ENCODE measurements at regions of chr5 and their contacts with region 1.

Region 1: GRCh38 chr5:115460472-115460871 is 84.1 kb downstream of the FEM1C start:
- DNase-seq: no peak
- H3K4me3 Mint-ChIP-seq: no peak overlapping the region
- H3K27ac Mint-ChIP-seq: no peak overlapping the region
- H3K4me1 Mint-ChIP-seq: peaks cover 6% of the 10 kb centered on the region
- H3K27me3 Mint-ChIP-seq: peaks cover 34% of the 10 kb centered on the region

Region 2: GRCh38 chr5:115209279-115209678 is 251.2 kb before region 1 on chr5:
- intact Hi-C with region 1: loop called (anchors 2 kb)
- DNase-seq: peak; percentile 62
- H3K4me3 Mint-ChIP-seq: no peak overlapping the region
- H3K27ac Mint-ChIP-seq: peak overlapping the region; percentile 67
- H3K4me1 Mint-ChIP-seq: peaks cover 22% of the 10 kb centered on the region
- H3K27me3 Mint-ChIP-seq: no peaks in the 10 kb centered on the region

Region 3: DNA sequence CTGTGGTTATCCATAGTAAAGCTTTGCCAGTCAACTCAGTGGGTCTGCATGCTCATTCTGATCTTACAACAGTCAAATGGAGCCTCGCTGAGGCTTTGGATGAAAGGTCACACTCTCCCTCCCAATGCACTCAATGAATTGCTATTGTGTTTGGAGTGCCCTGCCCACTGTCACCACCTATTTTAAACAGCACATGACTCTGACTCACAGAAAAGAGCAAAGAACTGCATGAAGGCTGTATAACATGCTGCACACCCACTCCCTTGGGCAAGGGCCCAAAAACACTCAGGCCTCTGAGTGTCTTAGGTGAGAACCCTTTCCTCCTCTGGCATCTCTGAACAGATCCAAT is 45.4 kb before region 1 on chr5:
- intact Hi-C with region 1: loop called (anchors 1 kb)
- DNase-seq: no peak
- H3K4me3 Mint-ChIP-seq: no peak overlapping the region
- H3K27ac Mint-ChIP-seq: no peak overlapping the region
- H3K4me1 Mint-ChIP-seq: peaks cover 3% of the 10 kb centered on the region
- H3K27me3 Mint-ChIP-seq: peaks cover 8% of the 10 kb centered on the region

Region 4: GRCh38 chr5:115544436-115545350 is 84.2 kb after region 1 on chr5 and contains the start of gene FEM1C:
- intact Hi-C with region 1: loop called (anchors 1 kb)
- DNase-seq: peak; percentile 92
- H3K4me3 Mint-ChIP-seq: peak within 1 kb of the TSS; percentile 97
- H3K27ac Mint-ChIP-seq: peak within 1 kb of the TSS; percentile 99
- H3K4me1 Mint-ChIP-seq: peaks cover 39% of the 10 kb centered on the region
- H3K27me3 Mint-ChIP-seq: no peaks in the 10 kb centered on the region
- total RNA-seq, gene FEM1C: 14.3 and 15.0 TPM in 2 replicates

Region 5: GRCh38 chr5:115634343-115635132 is 174.1 kb after region 1 on chr5:
- intact Hi-C with region 1: no loop called
- DNase-seq: peak; percentile 75
- H3K4me3 Mint-ChIP-seq: peak overlapping the region; percentile 33
- H3K27ac Mint-ChIP-seq: no peak overlapping the region
- H3K4me1 Mint-ChIP-seq: peaks cover 41% of the 10 kb centered on the region
- H3K27me3 Mint-ChIP-seq: peaks cover 57% of the 10 kb centered on the region

Region 6: DNA sequence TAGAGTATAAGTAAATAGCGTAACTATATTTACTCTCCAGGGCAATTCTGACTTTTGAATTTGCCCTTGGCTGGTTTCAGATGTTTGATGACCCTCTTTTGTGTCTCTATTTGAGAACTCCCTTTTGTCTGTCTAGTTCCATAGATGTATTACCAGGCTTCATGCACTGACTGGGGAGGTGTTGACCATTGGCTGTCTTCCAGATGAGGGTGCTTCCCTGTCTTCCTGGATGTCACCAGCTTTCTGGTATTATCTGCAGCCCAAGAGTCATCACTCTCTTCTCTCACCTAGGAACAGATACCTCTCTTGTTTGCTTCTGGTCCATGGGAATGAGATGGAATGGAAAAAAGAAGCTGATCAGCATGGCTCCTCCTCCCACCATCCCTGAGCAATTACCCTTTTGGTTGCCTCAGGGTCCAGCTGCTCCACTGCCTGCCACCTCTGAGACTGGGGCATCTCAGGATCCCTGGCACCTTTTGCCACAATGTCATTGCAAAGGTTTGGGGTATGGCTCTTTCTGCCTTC is 224.1 kb after region 1 on chr5:
- intact Hi-C with region 1: no loop called
- DNase-seq: no peak
- H3K4me3 Mint-ChIP-seq: no peak overlapping the region
- H3K27ac Mint-ChIP-seq: no peak overlapping the region
- H3K4me1 Mint-ChIP-seq: no peaks in the 10 kb centered on the region
- H3K27me3 Mint-ChIP-seq: peaks cover 16% of the 10 kb centered on the region

Region 7: DNA sequence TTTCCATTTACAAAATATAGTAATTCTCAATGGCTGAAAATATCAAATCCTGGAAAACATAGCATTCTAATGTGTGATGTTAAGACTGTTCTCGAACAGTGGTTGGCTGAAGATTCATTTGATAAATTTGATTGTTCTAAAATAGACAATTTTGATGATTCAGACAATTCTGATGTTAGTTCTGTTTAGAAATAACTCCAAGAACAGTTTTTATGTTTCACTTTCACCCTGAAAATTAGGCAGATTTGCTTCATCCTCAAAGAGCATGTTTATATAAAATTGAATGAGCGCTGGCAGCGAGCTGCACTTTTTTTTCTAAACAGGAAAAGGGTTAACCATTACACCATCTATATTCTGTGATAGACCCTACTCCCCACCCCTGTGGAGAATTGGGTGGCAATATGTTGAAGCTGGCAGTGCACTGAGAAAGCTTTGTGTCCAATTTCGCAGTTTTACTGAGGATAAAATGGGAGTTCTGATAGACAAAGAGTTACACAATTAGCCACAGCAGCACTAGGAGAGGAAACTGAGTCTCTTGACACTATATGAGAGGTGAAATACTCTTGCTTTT is 234.9 kb after region 1 on chr5:
- intact Hi-C with region 1: no loop called
- DNase-seq: no peak
- H3K4me3 Mint-ChIP-seq: no peak overlapping the region
- H3K27ac Mint-ChIP-seq: no peak overlapping the region
- H3K4me1 Mint-ChIP-seq: no peaks in the 10 kb centered on the region
- H3K27me3 Mint-ChIP-seq: peaks cover 22% of the 10 kb centered on the region

Region 8: GRCh38 chr5:115968770-115969169 is 508.3 kb after region 1 on chr5:
- intact Hi-C with region 1: no loop called
- DNase-seq: no peak
- H3K4me3 Mint-ChIP-seq: no peak overlapping the region
- H3K27ac Mint-ChIP-seq: no peak overlapping the region
- H3K4me1 Mint-ChIP-seq: no peaks in the 10 kb centered on the region
- H3K27me3 Mint-ChIP-seq: peaks cover 31% of the 10 kb centered on the region

Region 9: DNA sequence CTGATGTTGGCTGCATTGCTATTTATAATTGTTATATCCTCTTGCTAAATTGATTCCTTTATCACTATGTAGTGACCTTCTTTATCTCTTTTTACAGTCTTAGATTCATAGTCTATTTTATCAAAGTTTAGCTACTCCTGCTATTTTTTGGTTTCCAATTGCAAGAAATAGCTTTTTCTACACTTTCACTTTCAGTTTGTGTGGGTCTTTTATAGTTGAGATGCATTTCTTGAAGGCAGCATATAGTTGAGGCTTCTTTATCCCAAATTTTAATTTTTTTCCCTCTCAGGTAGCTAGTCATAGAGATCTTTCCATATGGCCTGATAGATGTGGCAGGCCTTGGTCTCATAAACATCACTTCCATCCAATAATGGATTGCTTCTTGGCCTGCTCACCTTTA is 852.9 kb after region 1 on chr5:
- intact Hi-C with region 1: loop called (anchors 10 kb)
- DNase-seq: no peak
- H3K4me3 Mint-ChIP-seq: no peak overlapping the region
- H3K27ac Mint-ChIP-seq: no peak overlapping the region
- H3K4me1 Mint-ChIP-seq: peaks cover 23% of the 10 kb centered on the region
- H3K27me3 Mint-ChIP-seq: no peaks in the 10 kb centered on the region

Measured in activated T-helper 2 cell treated with anti-CD3 and anti-CD28 coated beads, Interferon-gamma antibody, Interleukin-2, Interleukin-4, amounts not matched to agents 10 μg/mL and 5 μg/mL and 100 μg/mL, durations not matched to agents 14 hours and 24 hours and 36 hours (primary cell).